ENCODE measurements at regions of chr15 and their contacts with region 1.

Region 1: DNA sequence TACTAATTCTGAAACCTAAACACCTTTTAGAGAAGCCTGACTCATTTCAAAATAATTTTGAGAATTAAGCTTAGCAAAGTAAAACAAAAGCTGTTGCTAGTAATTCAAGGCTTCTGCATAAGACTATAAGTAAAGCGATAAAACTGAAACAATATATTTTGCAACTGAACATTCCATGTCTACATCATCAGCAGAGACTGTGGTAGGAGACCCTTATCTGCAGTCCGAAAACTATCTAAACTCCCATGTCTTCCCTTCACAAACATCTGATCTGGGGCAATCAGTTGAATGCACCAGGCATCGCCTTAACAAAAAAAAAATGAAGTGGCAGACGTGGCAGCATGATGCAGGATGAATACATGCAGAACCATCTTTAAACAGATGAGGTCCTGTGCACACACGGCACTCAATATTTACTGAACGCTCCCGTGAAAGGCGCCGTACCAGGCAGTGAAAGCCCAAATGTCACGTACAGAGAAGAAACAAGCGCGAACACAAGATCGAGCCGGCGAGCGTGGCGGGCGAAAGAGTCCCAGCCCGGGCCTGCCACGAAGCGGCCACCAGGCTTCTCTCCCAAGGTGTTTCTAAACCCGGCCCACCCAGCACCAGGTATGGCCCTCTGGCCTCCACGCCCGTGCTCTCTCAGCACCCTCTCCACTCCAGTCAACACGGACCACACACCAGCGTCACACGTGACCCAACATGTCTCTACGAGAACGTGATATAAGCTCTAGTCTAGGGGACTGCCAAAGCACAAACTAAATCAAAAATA is 63.0 kb downstream of the CHSY1 start:
- DNase-seq: peak; percentile 61 to 69 (median 65)
- H3K4me3 ChIP-seq: peak overlapping the region; percentile 13
- H3K27ac ChIP-seq: peak overlapping the region; percentile 79
- H3K4me1 ChIP-seq: peaks cover 34% of the 10 kb centered on the region
- H3K27me3 ChIP-seq: no peaks in the 10 kb centered on the region
- CTCF ChIP-seq: no peak
- EP300 ChIP-seq: no peak
- POLR2A ChIP-seq: no peak

Region 2: GRCh38 chr15:101127506-101128076 is 61.2 kb before region 1 on chr15:
- intact Hi-C with region 1: loop called in 1 of 4 experiments (anchors 10 kb)
- DNase-seq: peak; percentile 86 to 90 (median 87)
- H3K4me3 ChIP-seq: no peak overlapping the region
- H3K27ac ChIP-seq: peak overlapping the region; percentile 37 to 80
- H3K4me1 ChIP-seq: peaks cover 13% of the 10 kb centered on the region
- H3K27me3 ChIP-seq: no peaks in the 10 kb centered on the region
- CTCF ChIP-seq: no peak
- EP300 ChIP-seq: no peak
- POLR2A ChIP-seq: no peak

Region 3: GRCh38 chr15:101820784-101821183 is 632.0 kb after region 1 on chr15:
- intact Hi-C with region 1: no loop called
- DNase-seq: no peak
- H3K4me3 ChIP-seq: no peak overlapping the region
- H3K27ac ChIP-seq: no peak overlapping the region
- H3K4me1 ChIP-seq: no peaks in the 10 kb centered on the region
- H3K27me3 ChIP-seq: no peaks in the 10 kb centered on the region
- CTCF ChIP-seq: no peak
- EP300 ChIP-seq: no peak
- POLR2A ChIP-seq: no peak